ENCODE measurements at regions of chr4 and their contacts with region 1.

Region 1: DNA sequence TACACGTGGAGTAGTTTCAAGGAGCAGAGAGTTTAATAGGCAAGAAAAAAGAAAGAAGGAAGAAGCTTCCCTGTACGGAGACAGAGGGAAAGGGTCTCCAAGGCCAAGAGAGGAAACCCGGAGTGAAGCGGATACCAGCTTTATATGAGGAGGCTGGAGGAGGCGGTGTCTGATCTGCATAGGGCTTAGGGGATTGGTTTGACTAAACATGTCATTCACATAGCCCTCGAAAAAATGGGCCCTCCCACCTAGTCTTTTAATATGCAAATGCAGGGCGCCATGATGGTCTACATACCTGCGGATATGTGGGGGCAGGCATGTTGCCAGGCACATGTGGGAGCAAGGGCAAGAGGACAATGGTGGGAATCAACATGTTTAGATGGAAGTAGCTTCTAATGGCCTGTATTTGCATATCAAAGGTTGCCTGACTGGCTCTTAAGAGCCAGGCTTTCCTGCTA is 103.1 kb upstream of the UGT8 start:
- DNase-seq: peak; percentile 59 to 89
- H3K4me3 ChIP-seq: peak overlapping the region in 1 of 4 experiments; percentile 3; a peak in 1 of 8 replicates
- H3K27ac ChIP-seq: peak overlapping the region; percentile 81
- H3K4me1 ChIP-seq: peaks cover 0 to 4% (median 1%) of the 10 kb centered on the region in 4 experiments; a peak in 1 of 7 replicates
- H3K27me3 ChIP-seq: no peaks in the 10 kb centered on the region
- CTCF ChIP-seq: no peak
- EP300 ChIP-seq: 0 out of 3 replicates have a peak, but pooled peaks of 1 of the 2 experiments have one; percentile 65
- POLR2A ChIP-seq: peak in 1 of 2 experiments; percentile 58; a peak in 1 of 3 replicates
- RAD21 ChIP-seq: 0 out of 4 replicates have a peak, but pooled peaks of 1 of the 2 experiments have one; percentile 4

Region 2: DNA sequence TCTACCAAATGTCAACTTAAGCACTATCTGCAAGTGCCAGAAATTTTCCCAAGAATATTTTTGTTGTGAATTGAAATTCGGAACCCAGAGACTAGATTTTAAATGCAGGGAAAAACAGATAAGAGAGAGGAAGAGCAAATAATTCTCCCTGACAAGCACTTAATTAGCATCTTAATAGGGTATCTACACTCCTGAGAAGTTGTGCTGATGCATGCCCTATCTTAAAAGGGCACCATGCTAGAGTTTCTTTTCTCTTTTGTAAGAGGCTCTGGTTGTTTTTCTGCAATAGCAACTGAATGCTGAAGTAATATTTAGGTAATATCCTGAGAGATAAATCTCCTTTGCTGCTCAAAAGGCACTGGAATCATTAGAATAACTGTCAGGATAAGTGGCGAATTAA is 36.8 kb before region 1 on chr4:
- CTCF ChIA-PET with region 1: no interaction called
- POLR2A ChIA-PET with region 1: interaction called, 11 read pairs
- DNase-seq: no peak
- H3K4me3 ChIP-seq: peak overlapping the region in 1 of 4 experiments; percentile 24; a peak in 1 of 8 replicates
- H3K27ac ChIP-seq: no peak overlapping the region
- H3K4me1 ChIP-seq: peaks cover 0 to 12% (median 2%) of the 10 kb centered on the region in 4 experiments; a peak in 4 of 7 replicates
- H3K27me3 ChIP-seq: no peaks in the 10 kb centered on the region
- CTCF ChIP-seq: no peak
- EP300 ChIP-seq: no peak
- POLR2A ChIP-seq: no peak
- RAD21 ChIP-seq: no peak

Region 3: GRCh38 chr4:114476310-114476709 is 19.2 kb before region 1 on chr4:
- CTCF ChIA-PET with region 1: no interaction called
- POLR2A ChIA-PET with region 1: interaction called, 26 read pairs
- DNase-seq: no peak
- H3K4me3 ChIP-seq: no peak overlapping the region
- H3K27ac ChIP-seq: no peak overlapping the region
- H3K4me1 ChIP-seq: peaks cover 0 to 6% (median 0%) of the 10 kb centered on the region in 4 experiments; a peak in 2 of 7 replicates
- H3K27me3 ChIP-seq: no peaks in the 10 kb centered on the region
- CTCF ChIP-seq: no peak
- EP300 ChIP-seq: no peak
- POLR2A ChIP-seq: no peak
- RAD21 ChIP-seq: no peak

Region 4: GRCh38 chr4:114481856-114482255 is 13.6 kb before region 1 on chr4:
- CTCF ChIA-PET with region 1: no interaction called
- POLR2A ChIA-PET with region 1: interaction called, 26 read pairs
- DNase-seq: no peak
- H3K4me3 ChIP-seq: no peak overlapping the region
- H3K27ac ChIP-seq: no peak overlapping the region
- H3K4me1 ChIP-seq: peaks cover 0 to 3% (median 0%) of the 10 kb centered on the region in 4 experiments; a peak in 2 of 7 replicates
- H3K27me3 ChIP-seq: no peaks in the 10 kb centered on the region
- CTCF ChIP-seq: no peak
- EP300 ChIP-seq: no peak
- POLR2A ChIP-seq: no peak
- RAD21 ChIP-seq: no peak

Region 5: DNA sequence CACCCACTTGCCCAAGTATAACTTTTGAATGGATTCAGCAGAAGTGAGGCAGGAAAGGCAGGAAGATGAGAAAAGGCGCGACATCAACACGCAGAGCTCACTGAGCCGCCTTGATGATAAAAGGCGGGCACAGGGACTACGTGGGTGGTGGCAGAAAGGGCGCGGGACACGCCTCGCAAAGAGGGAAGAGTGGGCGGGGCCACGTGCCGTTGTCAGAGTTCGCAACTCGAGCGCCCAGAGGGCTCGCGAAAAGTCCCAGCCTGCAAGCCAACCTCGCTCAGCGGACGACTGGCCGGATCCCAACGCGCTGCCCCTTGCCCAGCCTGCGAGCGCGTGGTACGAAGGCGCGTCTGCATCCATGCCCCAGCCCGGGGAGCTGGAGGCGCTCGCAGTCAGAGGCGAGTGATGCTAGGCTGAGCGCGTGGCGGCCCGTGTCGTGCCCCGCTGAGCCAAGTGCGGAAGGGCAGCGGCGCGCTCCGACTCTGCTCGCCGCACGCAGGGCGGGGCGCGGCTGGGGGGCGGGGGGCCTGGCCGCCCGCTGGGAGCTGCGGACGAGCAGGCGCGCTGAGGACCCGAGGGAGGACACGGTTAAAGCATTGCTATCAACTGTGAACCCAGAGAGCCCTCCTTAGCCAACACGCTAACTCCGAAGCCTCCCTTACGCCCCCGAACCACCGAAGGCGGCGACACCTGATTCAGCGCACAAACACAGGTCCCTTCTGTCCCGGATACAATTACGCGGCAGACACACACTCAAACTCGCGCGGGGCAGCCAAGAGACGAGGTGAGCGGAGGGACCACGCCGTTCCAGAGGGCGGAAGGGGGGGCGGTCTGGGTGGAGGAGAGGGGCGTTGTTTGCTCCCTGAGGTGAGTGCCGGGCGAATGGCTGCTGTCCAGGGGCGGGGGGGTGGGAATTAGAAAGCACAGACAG is 103.0 kb after region 1 on chr4 and contains the start of gene UGT8:
- CTCF ChIA-PET with region 1: no interaction called
- POLR2A ChIA-PET with region 1: interaction called, 10 read pairs
- DNase-seq: peak in 1 of 2 experiments; percentile 84
- H3K4me3 ChIP-seq: peak within 1 kb of the TSS; percentile 80 to 95 (median 86)
- H3K27ac ChIP-seq: peak within 1 kb of the TSS; percentile 44; the same call in 1 of the 2 replicates
- H3K4me1 ChIP-seq: peaks cover 0 to 3% (median 1%) of the 10 kb centered on the region in 4 experiments; a peak in 3 of 7 replicates
- H3K27me3 ChIP-seq: no peaks in the 10 kb centered on the region
- CTCF ChIP-seq: no peak
- EP300 ChIP-seq: no peak
- POLR2A ChIP-seq: 0 out of 3 replicates have a peak, but pooled peaks of 1 of the 2 experiments have one; percentile 31
- RAD21 ChIP-seq: peak in 1 of 2 experiments; percentile 4; a peak in 2 of 4 replicates
- total RNA-seq, gene UGT8: 24.0 and 26.9 TPM in 2 replicates

Region 6: DNA sequence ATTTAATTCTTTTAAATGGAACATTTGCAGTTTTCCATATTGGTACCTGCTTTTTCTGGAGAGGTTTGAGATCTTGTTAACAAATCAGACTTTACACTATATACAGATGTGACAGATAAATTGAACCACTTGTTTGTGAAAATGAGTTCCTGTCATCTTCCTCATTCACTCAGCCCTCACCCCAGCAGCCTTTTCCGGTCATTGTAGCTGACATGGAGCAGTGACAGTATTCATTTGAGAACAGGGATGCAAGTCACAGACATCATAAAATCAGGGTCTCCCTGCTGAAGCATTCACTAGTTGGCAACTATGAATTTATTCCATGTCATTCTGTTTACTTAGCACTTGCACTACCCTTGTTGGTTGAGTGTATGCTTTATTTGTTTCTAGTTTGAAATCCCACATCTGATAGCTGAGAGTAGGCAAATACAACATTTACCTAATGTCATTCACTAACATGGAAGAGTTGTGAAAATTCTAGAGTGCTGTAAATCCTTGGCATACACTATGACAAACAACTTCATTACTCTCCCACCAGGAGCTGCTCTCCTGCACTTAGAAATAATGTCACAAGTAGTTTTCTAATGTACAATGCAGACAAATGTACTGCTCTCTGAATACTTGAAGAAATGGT is 182.0 kb after region 1 on chr4:
- CTCF ChIA-PET with region 1: no interaction called
- POLR2A ChIA-PET with region 1: no interaction called
- DNase-seq: no peak
- H3K4me3 ChIP-seq: no peak overlapping the region
- H3K27ac ChIP-seq: no peak overlapping the region
- H3K4me1 ChIP-seq: no peaks in the 10 kb centered on the region
- H3K27me3 ChIP-seq: no peaks in the 10 kb centered on the region
- CTCF ChIP-seq: no peak
- EP300 ChIP-seq: no peak
- POLR2A ChIP-seq: no peak
- RAD21 ChIP-seq: no peak